Naive thymus-derived CD4-positive, alpha-beta T cell (primary cell): ENCODE measurements at regions of chr5 and their contacts with region 1.

Region 1: DNA sequence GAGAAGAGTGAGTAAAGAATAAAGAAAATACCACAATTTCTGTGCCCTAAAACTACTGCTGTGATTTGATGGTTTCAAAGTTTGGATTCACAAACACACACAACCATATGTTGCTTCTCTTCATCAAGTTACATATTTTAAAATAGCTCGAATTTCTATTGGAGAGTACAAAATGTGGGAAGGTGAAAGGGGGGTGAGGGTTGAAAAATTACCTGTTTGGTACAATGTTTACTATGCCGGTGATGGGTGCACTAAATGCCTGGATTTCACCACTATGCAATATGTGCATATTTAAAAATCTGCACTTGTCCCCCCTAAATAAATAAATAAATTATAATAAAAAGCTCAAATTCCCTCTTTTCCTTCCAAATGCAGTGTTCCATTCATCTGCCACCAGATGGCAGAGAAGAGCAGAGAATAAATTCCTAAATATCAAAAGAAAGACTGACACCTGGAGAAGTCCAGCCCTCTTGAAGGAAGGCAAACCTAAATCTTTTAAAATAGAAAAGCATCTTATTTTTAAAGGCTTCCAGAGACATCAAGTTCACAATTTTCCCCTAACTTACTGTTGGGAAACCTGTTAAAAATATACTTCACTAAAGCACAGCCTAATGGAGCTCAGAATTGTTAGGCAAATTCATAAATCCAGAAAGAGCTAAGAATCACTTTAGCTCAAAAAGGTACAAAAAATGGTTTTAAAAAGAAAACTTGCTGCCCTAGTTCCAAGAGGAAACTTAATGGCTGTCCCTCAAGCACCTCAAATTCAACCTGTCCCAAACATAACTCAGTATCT is 24.8 kb upstream of the HNRNPA0 start:
- DNase-seq: peak in 5 of 9 donors; percentile 11 to 29 (median 16)
- ATAC-seq: no peak
- H3K4me3 ChIP-seq: no peak overlapping the region
- H3K4me3 Mint-ChIP-seq: no peak overlapping the region
- H3K27ac ChIP-seq: no peak overlapping the region
- H3K27ac Mint-ChIP-seq: no peak overlapping the region
- H3K4me1 ChIP-seq: no peaks in the 10 kb centered on the region
- H3K4me1 Mint-ChIP-seq: no peaks in the 10 kb centered on the region
- H3K27me3 ChIP-seq: no peaks in the 10 kb centered on the region
- H3K27me3 Mint-ChIP-seq: peaks cover 0 to 12% (median 0%) of the 10 kb centered on the region in 5 donors

Region 2: GRCh38 chr5:137415231-137415681 is 363.7 kb before region 1 on chr5:
- CTCF ChIA-PET with region 1: no interaction called
- POLR2A ChIA-PET with region 1: no interaction called
- intact Hi-C with region 1: no loop called
- DNase-seq: no peak
- ATAC-seq: no peak
- H3K4me3 ChIP-seq: no peak overlapping the region
- H3K4me3 Mint-ChIP-seq: no peak overlapping the region
- H3K27ac ChIP-seq: no peak overlapping the region
- H3K27ac Mint-ChIP-seq: no peak overlapping the region
- H3K4me1 ChIP-seq: no peaks in the 10 kb centered on the region
- H3K4me1 Mint-ChIP-seq: no peaks in the 10 kb centered on the region
- H3K27me3 ChIP-seq: no peaks in the 10 kb centered on the region
- H3K27me3 Mint-ChIP-seq: peaks cover 0 to 5% (median 0%) of the 10 kb centered on the region in 5 donors

Region 3: DNA sequence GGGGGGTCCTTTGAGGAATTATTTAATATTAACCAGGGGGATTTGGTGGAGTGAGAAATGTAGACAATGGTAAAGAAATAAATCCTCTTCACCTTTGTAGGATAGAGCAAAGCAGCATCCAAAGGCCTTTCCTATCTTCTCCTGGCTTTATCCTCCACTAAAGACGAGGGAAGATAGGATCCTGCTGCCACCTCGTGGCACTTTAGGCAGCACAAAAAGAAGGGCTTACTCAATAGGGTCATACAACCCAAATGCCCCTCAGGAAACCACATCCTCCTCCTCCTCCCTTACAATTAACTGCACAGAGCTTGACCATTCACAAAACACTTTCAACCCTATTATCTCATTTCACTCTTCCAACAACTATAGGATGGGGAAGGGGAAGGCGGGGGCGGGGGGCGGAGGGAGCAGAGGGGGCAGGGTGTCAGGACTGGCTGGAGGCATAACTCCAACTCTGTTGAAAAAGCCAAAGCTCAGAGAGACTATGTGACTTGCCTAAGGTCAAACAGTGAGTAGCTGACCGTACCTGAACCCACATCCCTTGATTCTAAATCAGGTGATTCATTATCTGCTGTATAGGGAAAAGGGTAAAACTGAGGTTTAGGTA is 43.3 kb after region 1 on chr5:
- CTCF ChIA-PET with region 1: no interaction called
- POLR2A ChIA-PET with region 1: no interaction called
- intact Hi-C with region 1: no loop called
- DNase-seq: no peak
- ATAC-seq: no peak
- H3K4me3 ChIP-seq: no peak overlapping the region
- H3K4me3 Mint-ChIP-seq: no peak overlapping the region
- H3K27ac ChIP-seq: no peak overlapping the region
- H3K27ac Mint-ChIP-seq: no peak overlapping the region
- H3K4me1 ChIP-seq: no peaks in the 10 kb centered on the region
- H3K4me1 Mint-ChIP-seq: no peaks in the 10 kb centered on the region
- H3K27me3 ChIP-seq: no peaks in the 10 kb centered on the region
- H3K27me3 Mint-ChIP-seq: peaks cover 0 to 6% (median 0%) of the 10 kb centered on the region in 5 donors

Region 4: GRCh38 chr5:138069068-138069600 is 290.2 kb after region 1 on chr5:
- CTCF ChIA-PET with region 1: interaction called, 5 read pairs
- POLR2A ChIA-PET with region 1: no interaction called
- intact Hi-C with region 1: loop called (anchors 1 kb)
- DNase-seq: no peak
- ATAC-seq: no peak
- H3K4me3 ChIP-seq: no peak overlapping the region
- H3K4me3 Mint-ChIP-seq: no peak overlapping the region
- H3K27ac ChIP-seq: no peak overlapping the region
- H3K27ac Mint-ChIP-seq: no peak overlapping the region
- H3K4me1 ChIP-seq: no peaks in the 10 kb centered on the region
- H3K4me1 Mint-ChIP-seq: peaks cover 0 to 11% (median 4%) of the 10 kb centered on the region in 7 donors
- H3K27me3 ChIP-seq: no peaks in the 10 kb centered on the region
- H3K27me3 Mint-ChIP-seq: no peaks in the 10 kb centered on the region

Region 5: DNA sequence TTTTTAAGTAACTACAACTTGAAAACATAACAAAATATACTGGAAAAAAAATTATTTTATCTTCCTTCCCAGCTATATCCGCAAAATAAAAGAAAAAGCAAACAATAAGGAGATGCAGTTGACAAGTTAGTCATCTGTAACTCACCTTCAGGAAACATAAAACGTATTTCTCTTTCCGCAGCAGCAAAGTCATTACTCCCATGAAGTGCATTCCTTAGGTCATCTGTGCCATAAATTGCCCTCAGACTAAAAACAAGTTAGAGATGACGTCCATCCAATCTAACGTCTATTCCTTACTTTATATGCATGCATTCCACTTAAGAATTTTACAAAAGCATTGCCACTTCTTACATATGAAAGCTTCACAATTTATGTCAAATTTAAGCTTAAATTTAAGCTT is 349.4 kb after region 1 on chr5:
- CTCF ChIA-PET with region 1: interaction called, 11 read pairs
- POLR2A ChIA-PET with region 1: no interaction called
- intact Hi-C with region 1: loop called (anchors 1 kb)
- DNase-seq: no peak
- ATAC-seq: no peak
- H3K4me3 ChIP-seq: no peak overlapping the region
- H3K4me3 Mint-ChIP-seq: no peak overlapping the region
- H3K27ac ChIP-seq: no peak overlapping the region
- H3K27ac Mint-ChIP-seq: no peak overlapping the region
- H3K4me1 ChIP-seq: no peaks in the 10 kb centered on the region
- H3K4me1 Mint-ChIP-seq: peaks cover 0 to 2% (median 0%) of the 10 kb centered on the region in 7 donors
- H3K27me3 ChIP-seq: no peaks in the 10 kb centered on the region
- H3K27me3 Mint-ChIP-seq: peaks cover 0 to 22% (median 4%) of the 10 kb centered on the region in 5 donors